ENCODE measurements at regions of chr1 and their contacts with region 1.

Region 1: GRCh38 chr1:223712194-223712849 is at the start of gene CAPN2:
- DNase-seq: peak in 1 of 2 donors; percentile 92
- H3K4me3 ChIP-seq: peak within 1 kb of the TSS; percentile 74 to 96
- H3K27ac ChIP-seq: peak within 1 kb of the TSS; percentile 89 to 95
- H3K4me1 ChIP-seq: peaks cover 14 to 45% of the 10 kb centered on the region in 2 donors
- H3K27me3 ChIP-seq: no peaks in the 10 kb centered on the region
- CTCF ChIP-seq: peak; percentile 63 to 94 (median 76)
- total RNA-seq, gene CAPN2: 178 TPM

Region 2: DNA sequence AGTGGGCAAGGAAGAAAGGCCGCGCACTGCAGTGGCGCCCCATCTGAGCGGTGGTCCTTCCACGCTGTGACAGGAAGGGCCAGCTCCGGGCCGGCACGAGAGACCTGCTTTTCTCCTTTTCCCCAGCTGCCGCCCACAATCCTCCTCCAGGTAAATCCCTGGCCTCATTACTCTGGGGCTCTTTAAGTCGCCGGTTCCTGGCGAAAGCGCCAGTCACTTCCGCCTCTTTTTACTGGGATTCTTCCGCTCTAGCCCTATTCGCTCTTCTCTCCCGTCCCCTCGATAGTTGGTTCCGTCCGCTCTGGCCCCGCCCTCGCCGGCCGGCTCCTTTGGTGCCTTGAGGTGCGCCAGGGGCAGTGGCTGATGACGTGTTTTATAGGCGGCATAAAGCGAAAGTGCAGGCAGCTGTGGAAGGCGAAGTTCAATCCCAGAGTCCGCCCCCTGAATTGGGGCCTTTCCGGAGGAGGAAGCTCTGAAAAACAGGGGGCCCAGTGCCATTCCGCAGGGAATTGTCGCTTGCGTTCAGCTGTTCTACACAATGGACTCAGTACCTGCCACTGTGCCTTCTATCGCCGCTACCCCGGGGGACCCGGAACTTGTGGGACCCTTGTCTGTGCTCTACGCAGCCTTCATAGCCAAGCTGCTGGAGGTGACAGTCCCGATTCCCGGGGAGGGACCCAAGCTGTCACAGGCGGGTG is 1068.2 kb before region 1 on chr1:
- intact Hi-C with region 1: loop called (anchors 10 kb)
- DNase-seq: peak; percentile 97 to 99
- H3K4me3 ChIP-seq: peak overlapping the region; percentile 83
- H3K27ac ChIP-seq: peak overlapping the region; percentile 89 to 98
- H3K4me1 ChIP-seq: peaks cover 0 to 11% of the 10 kb centered on the region in 2 donors
- H3K27me3 ChIP-seq: no peaks in the 10 kb centered on the region
- CTCF ChIP-seq: no peak

Region 3: GRCh38 chr1:223670458-223671168 is 41.7 kb before region 1 on chr1:
- intact Hi-C with region 1: no loop called
- DNase-seq: no peak
- H3K4me3 ChIP-seq: no peak overlapping the region
- H3K27ac ChIP-seq: no peak overlapping the region
- H3K4me1 ChIP-seq: no peaks in the 10 kb centered on the region
- H3K27me3 ChIP-seq: no peaks in the 10 kb centered on the region
- CTCF ChIP-seq: no peak

Region 4: DNA sequence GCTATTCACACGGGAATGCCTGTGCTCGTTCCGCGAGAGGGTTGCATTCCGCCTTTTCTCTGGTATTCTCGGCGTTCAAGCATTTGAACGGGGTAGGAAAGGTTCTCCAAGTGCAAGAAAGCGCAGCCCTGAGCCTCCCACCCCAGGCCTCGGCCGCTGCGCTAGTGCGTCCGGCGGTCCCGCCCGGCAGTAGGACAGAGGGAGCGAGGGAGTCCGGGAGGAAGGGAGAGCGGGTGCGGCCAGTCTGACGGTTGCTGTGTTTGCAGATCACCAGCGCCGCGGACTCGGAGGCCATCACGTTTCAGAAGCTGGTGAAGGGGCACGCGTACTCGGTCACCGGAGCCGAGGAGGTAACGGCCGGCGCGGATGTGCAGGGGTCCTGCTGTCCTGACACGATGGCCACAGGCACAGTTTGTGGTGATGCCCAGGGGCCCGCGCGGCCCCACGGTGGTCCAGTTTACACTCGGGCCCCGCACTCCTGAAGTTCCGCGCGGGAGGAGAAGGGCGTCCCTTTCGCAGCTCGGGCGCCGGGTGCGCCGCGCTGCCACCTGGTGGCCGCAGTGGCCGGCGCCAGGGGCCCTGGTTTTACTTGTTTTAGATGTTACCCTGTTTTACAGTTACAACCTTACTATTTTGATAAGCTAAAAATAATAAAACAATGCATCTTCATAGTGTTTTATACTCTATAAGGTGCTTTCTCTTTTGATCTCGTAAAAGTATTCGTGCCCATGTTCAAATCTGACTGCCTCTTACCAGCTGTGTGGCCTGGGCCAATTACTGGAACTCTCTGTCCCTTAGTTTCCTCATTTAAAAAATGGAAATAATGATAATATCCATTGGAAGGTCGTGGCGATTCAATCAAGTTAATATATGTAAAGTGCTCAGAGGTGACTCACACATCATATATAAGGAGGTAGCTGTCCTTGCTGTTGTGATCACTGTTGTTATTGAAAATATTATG is 36.7 kb after region 1 on chr1:
- intact Hi-C with region 1: loop called (anchors 1 kb)
- DNase-seq: peak in 1 of 2 donors; percentile 84
- H3K4me3 ChIP-seq: peak overlapping the region; percentile 43 to 61
- H3K27ac ChIP-seq: peak overlapping the region; percentile 50 to 80
- H3K4me1 ChIP-seq: peaks cover 9 to 21% of the 10 kb centered on the region in 2 donors
- H3K27me3 ChIP-seq: no peaks in the 10 kb centered on the region
- CTCF ChIP-seq: peak; percentile 91 to 94 (median 94)

Region 5: GRCh38 chr1:223845810-223846682 is 133.7 kb after region 1 on chr1 and contains the start of gene TP53BP2:
- intact Hi-C with region 1: loop called (anchors 5 kb)
- DNase-seq: peak; percentile 43 to 92
- H3K4me3 ChIP-seq: peak within 1 kb of the TSS; percentile 93 to 95
- H3K27ac ChIP-seq: peak within 1 kb of the TSS; percentile 100
- H3K4me1 ChIP-seq: peaks cover 2 to 22% of the 10 kb centered on the region in 2 donors
- H3K27me3 ChIP-seq: no peaks in the 10 kb centered on the region
- CTCF ChIP-seq: peak; percentile 54 to 87 (median 84)
- total RNA-seq, gene TP53BP2: 162 TPM

Region 6: GRCh38 chr1:224434691-224435317 is 722.5 kb after region 1 on chr1 and contains the start of gene WDR26:
- intact Hi-C with region 1: loop called (anchors 10 kb)
- DNase-seq: peak; percentile 44 to 91
- H3K4me3 ChIP-seq: peak within 1 kb of the TSS; percentile 73 to 76
- H3K27ac ChIP-seq: peak within 1 kb of the TSS; percentile 99 to 100
- H3K4me1 ChIP-seq: peaks cover 0 to 27% of the 10 kb centered on the region in 2 donors
- H3K27me3 ChIP-seq: no peaks in the 10 kb centered on the region
- CTCF ChIP-seq: no peak
- total RNA-seq, gene WDR26: 31.8 TPM

Region 7: GRCh38 chr1:224488806-224489499 is 776.6 kb after region 1 on chr1:
- intact Hi-C with region 1: no loop called
- DNase-seq: no peak
- H3K4me3 ChIP-seq: no peak overlapping the region
- H3K27ac ChIP-seq: no peak overlapping the region
- H3K4me1 ChIP-seq: no peaks in the 10 kb centered on the region
- H3K27me3 ChIP-seq: no peaks in the 10 kb centered on the region
- CTCF ChIP-seq: no peak

Measured in ascending aorta (tissue), 2 donors.